ENCODE measurements at regions of chr18 and their contacts with region 1.

Region 1: GRCh38 chr18:23703057-23703986 is 14.1 kb downstream of the LAMA3 start:
- DNase-seq: peak; percentile 67
- H3K4me3 ChIP-seq: no peak overlapping the region
- H3K27ac ChIP-seq: no peak overlapping the region
- H3K4me1 ChIP-seq: peaks cover 0 to 2% of the 10 kb centered on the region in 2 experiments; a peak in 1 of 4 replicates
- H3K27me3 ChIP-seq: no peaks in the 10 kb centered on the region
- CTCF ChIP-seq: peak; percentile 70
- EP300 ChIP-seq: no peak
- RAD21 ChIP-seq: peak; percentile 98

Region 2: GRCh38 chr18:23504720-23505119 is 198.6 kb before region 1 on chr18:
- CTCF ChIA-PET with region 1: interaction called, 22 read pairs
- POLR2A ChIA-PET with region 1: no interaction called
- DNase-seq: no peak
- H3K4me3 ChIP-seq: peak overlapping the region in 1 of 2 experiments; percentile 96; a peak in 3 of 4 replicates
- H3K27ac ChIP-seq: no peak overlapping the region
- H3K4me1 ChIP-seq: peaks cover 8 to 20% of the 10 kb centered on the region in 2 experiments; a peak in 1 of 4 replicates
- H3K27me3 ChIP-seq: no peaks in the 10 kb centered on the region
- CTCF ChIP-seq: no peak
- EP300 ChIP-seq: no peak
- RAD21 ChIP-seq: no peak

Region 3: GRCh38 chr18:23540867-23541266 is 162.5 kb before region 1 on chr18:
- CTCF ChIA-PET with region 1: interaction called, 11 read pairs
- POLR2A ChIA-PET with region 1: no interaction called
- DNase-seq: no peak
- H3K4me3 ChIP-seq: no peak overlapping the region
- H3K27ac ChIP-seq: no peak overlapping the region
- H3K4me1 ChIP-seq: no peaks in the 10 kb centered on the region; a peak in 1 of 4 replicates
- H3K27me3 ChIP-seq: no peaks in the 10 kb centered on the region
- CTCF ChIP-seq: no peak
- EP300 ChIP-seq: no peak
- RAD21 ChIP-seq: no peak

Region 4: DNA sequence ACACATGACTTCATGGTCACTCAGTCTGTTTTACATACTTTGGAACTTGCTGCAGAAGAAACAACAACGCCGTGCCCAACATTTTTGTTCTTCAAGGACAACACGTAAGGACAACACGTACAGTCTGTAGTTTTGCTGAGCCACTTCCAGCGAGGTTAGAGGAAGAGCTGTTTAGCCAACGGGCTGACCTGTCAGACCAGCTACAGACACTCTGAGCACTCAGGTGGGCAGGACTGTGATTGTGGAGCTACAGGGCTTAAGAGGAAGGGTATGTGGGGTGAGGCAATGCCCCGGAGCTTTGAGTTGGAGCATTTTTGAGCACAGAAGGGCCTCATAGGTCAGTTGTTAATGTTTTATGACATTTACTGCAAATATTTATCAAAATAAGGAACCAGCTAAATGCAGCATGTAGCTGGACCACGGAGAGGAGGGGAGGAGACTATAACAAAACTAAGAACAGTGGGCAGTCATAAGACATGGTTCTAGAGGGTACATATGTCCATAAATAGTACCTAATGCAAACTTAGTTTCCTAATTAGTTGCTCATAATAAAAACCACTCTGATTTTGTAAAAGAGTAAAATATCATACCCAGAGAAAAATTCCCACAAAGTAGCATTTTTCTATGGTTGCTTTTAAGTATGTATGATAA is 90.8 kb before region 1 on chr18:
- CTCF ChIA-PET with region 1: interaction called, 22 read pairs
- POLR2A ChIA-PET with region 1: no interaction called
- DNase-seq: no peak
- H3K4me3 ChIP-seq: no peak overlapping the region
- H3K27ac ChIP-seq: no peak overlapping the region
- H3K4me1 ChIP-seq: no peaks in the 10 kb centered on the region
- H3K27me3 ChIP-seq: no peaks in the 10 kb centered on the region
- CTCF ChIP-seq: no peak
- EP300 ChIP-seq: no peak
- RAD21 ChIP-seq: no peak

Region 5: GRCh38 chr18:23629444-23629946 is 73.8 kb before region 1 on chr18:
- CTCF ChIA-PET with region 1: interaction called, 95 read pairs
- POLR2A ChIA-PET with region 1: no interaction called
- DNase-seq: no peak
- H3K4me3 ChIP-seq: no peak overlapping the region
- H3K27ac ChIP-seq: no peak overlapping the region
- H3K4me1 ChIP-seq: peaks cover 19 to 23% of the 10 kb centered on the region in 2 experiments
- H3K27me3 ChIP-seq: no peaks in the 10 kb centered on the region
- CTCF ChIP-seq: no peak
- EP300 ChIP-seq: no peak
- RAD21 ChIP-seq: no peak

Region 6: DNA sequence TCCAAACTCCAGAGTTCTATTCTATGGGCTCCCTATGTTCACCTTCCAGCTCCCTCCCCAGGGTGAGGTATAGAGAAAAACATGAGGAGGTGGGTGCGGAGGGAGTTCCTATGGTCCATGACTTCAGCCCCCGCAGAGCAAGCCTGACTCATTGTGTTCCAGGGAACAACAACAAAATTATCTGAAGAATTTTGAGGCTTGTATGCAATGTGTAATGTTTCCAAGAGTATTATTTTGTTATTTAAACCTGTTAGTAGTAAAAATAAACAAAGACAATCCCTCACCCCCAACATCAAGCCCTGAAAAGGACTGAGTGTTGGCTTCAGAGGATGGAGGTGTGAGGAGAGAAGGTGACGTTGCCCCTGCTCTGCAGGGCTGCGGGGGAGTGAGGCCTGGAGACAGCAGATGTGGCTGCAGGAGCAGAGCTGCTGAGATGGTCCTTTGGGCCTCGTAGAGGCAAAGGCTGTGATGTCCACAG is 15.0 kb after region 1 on chr18:
- CTCF ChIA-PET with region 1: interaction called, 13 read pairs
- POLR2A ChIA-PET with region 1: no interaction called
- DNase-seq: no peak
- H3K4me3 ChIP-seq: no peak overlapping the region
- H3K27ac ChIP-seq: peak overlapping the region in 1 of 2 experiments; percentile 91; a peak in 2 of 4 replicates
- H3K4me1 ChIP-seq: peaks cover 0 to 25% of the 10 kb centered on the region in 2 experiments; a peak in 2 of 4 replicates
- H3K27me3 ChIP-seq: no peaks in the 10 kb centered on the region
- CTCF ChIP-seq: no peak
- EP300 ChIP-seq: no peak
- RAD21 ChIP-seq: no peak